Activated CD4-positive, alpha-beta T cell treated with anti-CD3 and anti-CD28 coated beads, Interleukin-2, amount 10 ng/mL, durations not matched to agents 24 days and 14 days (primary cell): ENCODE measurements at regions of chr2 and their contacts with region 1.

Region 1: DNA sequence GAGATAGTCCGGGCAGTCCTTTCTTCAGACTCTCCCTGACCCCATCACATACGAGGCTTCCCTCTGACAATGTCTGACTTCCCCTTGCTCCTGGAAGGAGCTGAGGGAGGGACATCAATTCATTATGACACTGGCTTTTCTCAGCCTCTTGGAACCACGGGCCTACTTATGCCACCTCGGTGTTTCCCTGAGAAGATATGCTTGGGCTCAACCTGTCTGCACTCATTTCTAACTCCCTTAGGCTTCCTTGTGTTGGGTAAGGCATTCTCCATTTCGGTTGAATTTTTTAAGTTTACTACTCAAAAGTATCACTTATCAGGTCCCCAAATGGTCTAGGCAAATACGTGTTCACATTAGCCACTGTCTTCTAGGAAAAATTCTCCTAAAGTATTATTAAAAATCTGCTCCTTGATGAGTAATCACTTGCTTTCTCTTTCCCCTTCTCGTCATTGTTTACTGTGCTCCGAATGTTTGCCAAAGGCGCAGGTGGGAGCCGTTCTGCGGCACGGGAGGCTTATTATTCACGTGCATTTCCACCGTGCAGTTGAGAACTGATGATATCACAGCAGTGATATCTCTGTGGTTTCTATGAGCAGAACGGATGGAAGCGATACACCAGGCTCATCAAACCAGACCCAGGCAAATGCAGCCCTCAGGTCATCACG is 33.1 kb downstream of the ARL4C start:
- DNase-seq: peak; percentile 92
- H3K4me3 Mint-ChIP-seq: peak overlapping the region; percentile 79
- H3K27ac Mint-ChIP-seq: peak overlapping the region; percentile 85
- H3K4me1 Mint-ChIP-seq: peaks cover 55% of the 10 kb centered on the region
- H3K27me3 Mint-ChIP-seq: no peaks in the 10 kb centered on the region

Region 2: GRCh38 chr2:234437642-234438304 is 26.0 kb before region 1 on chr2:
- intact Hi-C with region 1: no loop called
- DNase-seq: no peak
- H3K4me3 Mint-ChIP-seq: no peak overlapping the region
- H3K27ac Mint-ChIP-seq: no peak overlapping the region
- H3K4me1 Mint-ChIP-seq: peaks cover 63% of the 10 kb centered on the region
- H3K27me3 Mint-ChIP-seq: no peaks in the 10 kb centered on the region

Region 3: DNA sequence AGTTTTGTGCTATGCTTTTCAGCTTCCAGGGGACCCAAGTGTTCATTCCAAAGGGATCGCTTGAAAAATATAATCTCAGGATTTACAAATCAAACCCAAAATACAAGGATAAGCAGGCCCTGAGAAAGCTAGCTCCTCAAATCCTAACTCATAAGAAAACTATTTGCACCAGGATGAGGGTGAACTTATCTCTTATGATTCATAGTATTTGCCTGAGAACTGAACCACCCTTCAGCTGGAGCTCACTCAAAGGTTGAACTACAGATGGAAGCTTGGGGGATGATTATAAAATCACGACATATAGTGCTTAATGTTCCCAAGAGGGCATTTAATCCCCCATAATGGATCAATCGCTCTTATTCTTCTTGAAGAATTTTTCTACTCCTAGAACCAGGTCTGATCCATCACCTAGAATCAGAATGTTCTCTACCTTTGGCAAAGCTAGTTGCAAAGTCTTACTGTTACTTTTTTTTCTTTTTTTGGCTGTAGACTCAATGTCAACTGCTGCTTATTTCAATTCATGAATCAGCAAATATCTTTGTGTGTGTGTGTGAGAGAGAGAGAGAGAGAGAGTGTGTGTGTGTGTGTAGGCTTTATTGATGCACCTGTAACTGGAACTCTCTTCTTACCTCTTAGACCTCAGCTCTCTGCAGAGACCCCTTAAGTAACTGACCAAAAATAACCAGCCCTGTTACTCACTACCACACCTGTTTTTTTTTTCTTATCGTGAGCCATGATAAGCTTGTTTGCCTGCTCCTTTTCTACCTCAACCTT is 11.7 kb before region 1 on chr2:
- intact Hi-C with region 1: loop called (anchors 1 kb)
- DNase-seq: no peak
- H3K4me3 Mint-ChIP-seq: peak overlapping the region; percentile 86
- H3K27ac Mint-ChIP-seq: peak overlapping the region; percentile 91
- H3K4me1 Mint-ChIP-seq: peaks cover 78% of the 10 kb centered on the region
- H3K27me3 Mint-ChIP-seq: no peaks in the 10 kb centered on the region

Region 4: GRCh38 chr2:234474654-234475053 is 10.9 kb after region 1 on chr2:
- intact Hi-C with region 1: loop called (anchors 1 kb)
- DNase-seq: no peak
- H3K4me3 Mint-ChIP-seq: no peak overlapping the region
- H3K27ac Mint-ChIP-seq: peak overlapping the region; percentile 86
- H3K4me1 Mint-ChIP-seq: peaks cover 43% of the 10 kb centered on the region
- H3K27me3 Mint-ChIP-seq: no peaks in the 10 kb centered on the region

Region 5: DNA sequence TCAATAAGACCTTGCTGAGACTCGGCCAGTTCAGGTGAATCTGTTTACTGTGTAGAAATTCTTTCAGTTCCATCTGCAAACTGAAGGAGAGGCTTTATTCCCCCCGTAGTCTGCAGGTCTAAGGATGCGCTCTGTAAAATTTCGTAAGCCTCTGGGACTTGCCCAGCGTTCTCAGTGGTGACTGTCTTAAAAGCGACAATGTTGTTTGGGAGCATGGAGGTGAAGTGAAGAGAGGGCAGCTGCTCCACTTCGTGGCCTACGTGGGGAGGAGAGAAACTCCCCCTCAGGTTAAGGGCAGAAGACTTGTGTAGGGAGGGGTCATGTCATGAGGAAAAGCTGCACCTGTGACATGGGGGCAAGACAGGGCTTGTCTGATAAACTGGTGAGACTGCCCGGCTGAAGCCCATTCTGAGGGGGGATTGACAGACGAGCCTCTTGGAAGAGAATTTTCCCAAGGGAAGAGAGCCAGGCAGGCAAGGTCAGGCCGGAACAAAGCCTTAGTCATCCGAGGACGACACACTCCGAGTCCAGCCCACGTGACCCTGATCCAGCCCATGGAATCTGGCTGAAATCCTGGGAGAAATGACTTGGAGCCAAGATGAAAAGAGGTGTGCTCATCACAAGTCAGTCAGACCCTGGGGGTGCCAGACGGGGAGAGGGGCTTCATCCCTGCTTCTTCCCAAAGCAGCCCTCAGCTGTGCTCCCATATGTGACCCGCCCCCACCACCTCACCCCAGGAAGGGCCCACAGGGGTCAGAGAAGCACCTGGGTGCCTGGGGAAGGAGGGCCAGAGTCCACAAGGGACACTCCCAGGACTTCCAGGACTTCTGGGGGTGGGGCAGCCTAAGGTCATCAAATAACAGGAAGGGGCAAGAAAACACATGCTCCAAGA is 399.5 kb after region 1 on chr2:
- intact Hi-C with region 1: no loop called
- DNase-seq: no peak
- H3K4me3 Mint-ChIP-seq: no peak overlapping the region
- H3K27ac Mint-ChIP-seq: no peak overlapping the region
- H3K4me1 Mint-ChIP-seq: no peaks in the 10 kb centered on the region
- H3K27me3 Mint-ChIP-seq: no peaks in the 10 kb centered on the region